Dorsolateral prefrontal cortex (tissue), 120 donors: ENCODE measurements at regions of chr1 and their contacts with region 1.

Region 1: GRCh38 chr1:56578963-56579875 is at the start of gene PLPP3:
- DNase-seq: peak; percentile 14 to 83 (median 78)
- H3K4me3 ChIP-seq: peak within 1 kb of the TSS; percentile 62 to 97 (median 86)
- H3K27ac ChIP-seq: peak within 1 kb of the TSS; percentile 45 to 98 (median 94)
- H3K27me3 ChIP-seq: peaks cover 0 to 10% (median 0%) of the 10 kb centered on the region in 45 donors
- CTCF ChIP-seq: peak; percentile 29 to 68 (median 54)
- total RNA-seq, gene PLPP3: 59.9 to 264 (median 115) TPM

Region 2: DNA sequence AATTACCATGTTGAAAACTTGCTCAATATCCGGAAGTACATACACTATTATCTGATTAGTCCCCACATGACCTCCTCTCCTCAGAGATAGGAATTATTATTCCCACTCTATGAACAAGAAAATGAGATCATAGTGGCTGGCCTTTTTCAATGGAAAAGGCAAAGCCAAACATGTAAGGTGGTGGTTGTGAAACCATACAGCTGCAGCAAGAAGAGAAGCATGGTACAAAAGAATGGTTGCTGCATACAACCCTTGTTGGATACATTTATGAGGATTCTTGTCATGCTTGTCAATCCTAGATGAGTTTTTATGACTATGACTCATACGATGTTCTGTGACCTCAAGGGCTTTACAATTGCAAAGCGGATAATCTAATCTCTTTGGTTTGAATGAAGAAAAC is 514.5 kb before region 1 on chr1:
- intact Hi-C with region 1: loop called (anchors 2 to 5 kb)
- DNase-seq: no peak
- H3K4me3 ChIP-seq: no peak overlapping the region
- H3K27ac ChIP-seq: no peak overlapping the region
- H3K27me3 ChIP-seq: no peaks in the 10 kb centered on the region
- CTCF ChIP-seq: no peak

Region 3: GRCh38 chr1:56376188-56376984 is 202.8 kb before region 1 on chr1:
- intact Hi-C with region 1: loop called in 1 of 2 experiments (anchors 10 kb)
- DNase-seq: peak in 1 of 10 donors; percentile 51
- H3K4me3 ChIP-seq: no peak overlapping the region
- H3K27ac ChIP-seq: no peak overlapping the region
- H3K27me3 ChIP-seq: peaks cover 0 to 4% (median 0%) of the 10 kb centered on the region in 45 donors
- CTCF ChIP-seq: no peak

Region 4: GRCh38 chr1:56434740-56435139 is 144.5 kb before region 1 on chr1:
- intact Hi-C with region 1: loop called (anchors 2 kb)
- DNase-seq: no peak
- H3K4me3 ChIP-seq: no peak overlapping the region
- H3K27ac ChIP-seq: peak overlapping the region in 57 of 59 donors; percentile 69 to 99 (median 95)
- H3K27me3 ChIP-seq: peaks cover 0 to 2% (median 0%) of the 10 kb centered on the region in 45 donors
- CTCF ChIP-seq: peak in 6 of 56 donors; percentile 7 to 26 (median 14)